IMR-90 (cell line): ENCODE measurements at regions of chr12 and their contacts with region 1.

Region 1: GRCh38 chr12:76348079-76348901 is at the start of gene BBS10:
- DNase-seq: peak; percentile 91
- ATAC-seq: peak; percentile 96
- H3K4me3 ChIP-seq: peak within 1 kb of the TSS; percentile 79
- H3K27ac ChIP-seq: peak within 1 kb of the TSS; percentile 91
- H3K4me1 ChIP-seq: peaks cover 5% of the 10 kb centered on the region; the same call in 1 of the 2 replicates
- H3K27me3 ChIP-seq: no peaks in the 10 kb centered on the region
- CTCF ChIP-seq: peak; percentile 42
- POLR2A ChIP-seq: no peak
- RAD21 ChIP-seq: peak; percentile 39; the same call in 1 of the 2 replicates
- total RNA-seq, gene BBS10: 10.0 and 15.8 TPM in 2 replicates

Region 2: DNA sequence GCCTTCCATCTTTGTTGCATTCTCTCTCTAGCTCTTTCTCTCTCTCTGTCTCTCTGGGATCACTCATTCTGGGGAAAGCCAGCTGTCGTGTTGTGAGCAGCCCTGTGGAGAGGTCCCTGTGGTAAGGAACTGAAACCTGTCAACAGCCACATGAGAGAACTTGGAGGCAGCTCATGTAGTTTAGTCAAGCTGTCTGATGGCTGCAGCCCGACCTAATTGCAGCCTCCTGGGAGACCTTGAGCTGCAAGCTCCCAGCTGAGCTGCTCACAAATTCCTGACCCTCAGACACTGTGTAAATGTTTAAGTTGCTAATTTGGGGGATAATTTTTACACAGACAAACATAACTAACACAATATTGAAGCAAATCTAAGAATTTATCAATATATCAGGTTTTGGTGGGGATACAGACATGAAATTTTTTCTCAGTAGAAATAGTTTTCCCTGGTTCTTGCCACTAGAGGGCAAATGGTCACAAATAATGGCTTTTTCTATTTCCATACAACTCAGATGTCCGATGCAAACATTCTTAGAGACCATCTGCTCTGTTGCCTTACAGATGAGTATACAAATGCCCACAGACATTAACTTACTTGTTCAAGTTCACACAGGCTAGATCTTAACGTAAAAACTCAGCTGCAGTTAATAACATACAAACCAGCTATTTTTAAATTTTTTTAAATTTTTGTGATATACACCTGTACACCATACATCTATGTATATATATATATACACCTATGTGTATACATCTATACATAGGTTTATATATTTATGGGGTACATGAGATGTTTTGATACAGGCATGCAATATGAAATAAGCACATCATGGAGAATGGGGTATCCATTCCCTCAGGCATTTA is 821.4 kb before region 1 on chr12:
- CTCF ChIA-PET with region 1: interaction called, 4 read pairs
- POLR2A ChIA-PET with region 1: no interaction called
- dilution Hi-C with region 1: no loop called
- in situ Hi-C with region 1: loop called (anchors 10 kb)
- intact Hi-C with region 1: loop called (anchors 2 kb)
- DNase-seq: peak; percentile 84
- ATAC-seq: peak; percentile 78
- H3K4me3 ChIP-seq: no peak overlapping the region
- H3K27ac ChIP-seq: peak overlapping the region; percentile 98
- H3K4me1 ChIP-seq: peaks cover 11% of the 10 kb centered on the region
- H3K27me3 ChIP-seq: no peaks in the 10 kb centered on the region
- CTCF ChIP-seq: peak; percentile 82
- POLR2A ChIP-seq: no peak
- RAD21 ChIP-seq: peak; percentile 92

Region 3: DNA sequence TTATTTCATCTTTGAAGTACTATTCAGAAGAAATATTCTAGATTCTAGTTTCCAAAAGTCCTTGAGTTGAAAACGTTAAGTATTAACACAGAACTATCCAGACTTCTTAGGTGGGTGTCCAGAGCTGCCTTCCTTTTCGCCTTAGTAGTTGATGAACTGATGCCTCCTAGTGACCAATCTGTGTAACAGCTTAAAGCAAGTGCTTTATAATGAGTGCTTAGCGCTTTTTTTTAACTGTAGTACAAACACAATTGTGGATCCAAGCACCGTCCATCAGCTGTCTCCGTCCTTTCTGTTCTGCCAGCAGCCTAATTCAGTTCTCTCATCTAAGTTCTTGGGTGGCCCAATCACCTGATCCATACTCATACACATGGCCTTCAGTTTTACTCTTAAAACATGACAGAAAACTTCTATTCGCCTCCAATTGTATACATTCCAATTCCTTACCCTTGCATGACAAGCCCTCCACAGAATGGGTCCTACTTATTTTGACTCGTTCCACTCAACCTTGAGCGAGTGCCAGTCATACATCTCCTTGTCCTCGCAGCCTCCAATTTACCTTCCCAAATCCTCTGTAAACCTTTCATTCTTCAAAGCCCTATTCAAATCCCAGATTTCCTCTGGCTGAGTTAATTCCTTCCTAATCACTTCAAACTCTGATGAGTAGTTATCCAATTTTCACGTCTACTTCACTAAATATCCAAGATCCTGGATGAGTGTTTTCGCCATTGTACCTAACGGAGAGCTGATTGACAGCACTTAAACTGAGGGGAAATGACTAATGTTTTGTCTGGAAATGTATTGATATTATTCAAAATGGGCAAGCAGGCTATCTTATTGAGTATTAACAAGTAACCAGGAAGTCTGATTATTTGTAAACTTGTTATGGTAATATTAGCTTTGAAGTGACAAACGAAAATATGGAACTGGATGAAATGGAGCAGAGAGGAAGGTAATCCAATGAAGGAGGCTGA is 310.9 kb before region 1 on chr12:
- CTCF ChIA-PET with region 1: no interaction called
- POLR2A ChIA-PET with region 1: no interaction called
- dilution Hi-C with region 1: no loop called
- in situ Hi-C with region 1: loop called (anchors 5 kb)
- intact Hi-C with region 1: no loop called
- DNase-seq: peak; percentile 87
- ATAC-seq: peak; percentile 58
- H3K4me3 ChIP-seq: no peak overlapping the region
- H3K27ac ChIP-seq: no peak overlapping the region
- H3K4me1 ChIP-seq: peaks cover 11% of the 10 kb centered on the region
- H3K27me3 ChIP-seq: no peaks in the 10 kb centered on the region
- CTCF ChIP-seq: peak; percentile 87
- POLR2A ChIP-seq: no peak
- RAD21 ChIP-seq: peak; percentile 90

Region 4: GRCh38 chr12:76074701-76075336 is 273.5 kb before region 1 on chr12:
- CTCF ChIA-PET with region 1: interaction called, 4 read pairs
- POLR2A ChIA-PET with region 1: no interaction called
- dilution Hi-C with region 1: no loop called
- in situ Hi-C with region 1: loop called (anchors 10 kb)
- intact Hi-C with region 1: no loop called
- DNase-seq: no peak
- ATAC-seq: no peak
- H3K4me3 ChIP-seq: no peak overlapping the region
- H3K27ac ChIP-seq: peak overlapping the region; percentile 29; the same call in 1 of the 2 replicates
- H3K4me1 ChIP-seq: peaks cover 5% of the 10 kb centered on the region
- H3K27me3 ChIP-seq: no peaks in the 10 kb centered on the region
- CTCF ChIP-seq: no peak
- POLR2A ChIP-seq: no peak
- RAD21 ChIP-seq: no peak

Region 5: GRCh38 chr12:76158518-76159321 is 189.6 kb before region 1 on chr12:
- CTCF ChIA-PET with region 1: interaction called, 4 read pairs
- POLR2A ChIA-PET with region 1: no interaction called
- dilution Hi-C with region 1: no loop called
- in situ Hi-C with region 1: no loop called
- intact Hi-C with region 1: loop called (anchors 1 kb)
- DNase-seq: peak; percentile 84
- ATAC-seq: peak; percentile 97
- H3K4me3 ChIP-seq: no peak overlapping the region
- H3K27ac ChIP-seq: no peak overlapping the region
- H3K4me1 ChIP-seq: peaks cover 5% of the 10 kb centered on the region; the same call in 1 of the 2 replicates
- H3K27me3 ChIP-seq: no peaks in the 10 kb centered on the region
- CTCF ChIP-seq: peak; percentile 59
- POLR2A ChIP-seq: no peak
- RAD21 ChIP-seq: peak; percentile 70

Region 6: GRCh38 chr12:76455582-76456345 is 107.5 kb after region 1 on chr12:
- CTCF ChIA-PET with region 1: no interaction called
- POLR2A ChIA-PET with region 1: no interaction called
- dilution Hi-C with region 1: no loop called
- in situ Hi-C with region 1: no loop called
- intact Hi-C with region 1: loop called (anchors 1 kb)
- DNase-seq: peak; percentile 95
- ATAC-seq: peak; percentile 95
- H3K4me3 ChIP-seq: no peak overlapping the region
- H3K27ac ChIP-seq: no peak overlapping the region
- H3K4me1 ChIP-seq: peaks cover 2% of the 10 kb centered on the region; the same call in 1 of the 2 replicates
- H3K27me3 ChIP-seq: no peaks in the 10 kb centered on the region
- CTCF ChIP-seq: peak; percentile 79
- POLR2A ChIP-seq: no peak
- RAD21 ChIP-seq: peak; percentile 83